Mammary epithelial cell (primary cell): ENCODE measurements at regions of chr19 and their contacts with region 1.

Region 1: GRCh38 chr19:33887891-33888290 is 91.2 kb downstream of the KCTD15 start:
- DNase-seq: no peak
- H3K4me3 ChIP-seq: no peak overlapping the region
- H3K27ac ChIP-seq: no peak overlapping the region
- H3K4me1 ChIP-seq: no peaks in the 10 kb centered on the region
- H3K27me3 ChIP-seq: no peaks in the 10 kb centered on the region
- CTCF ChIP-seq: no peak

Region 2: DNA sequence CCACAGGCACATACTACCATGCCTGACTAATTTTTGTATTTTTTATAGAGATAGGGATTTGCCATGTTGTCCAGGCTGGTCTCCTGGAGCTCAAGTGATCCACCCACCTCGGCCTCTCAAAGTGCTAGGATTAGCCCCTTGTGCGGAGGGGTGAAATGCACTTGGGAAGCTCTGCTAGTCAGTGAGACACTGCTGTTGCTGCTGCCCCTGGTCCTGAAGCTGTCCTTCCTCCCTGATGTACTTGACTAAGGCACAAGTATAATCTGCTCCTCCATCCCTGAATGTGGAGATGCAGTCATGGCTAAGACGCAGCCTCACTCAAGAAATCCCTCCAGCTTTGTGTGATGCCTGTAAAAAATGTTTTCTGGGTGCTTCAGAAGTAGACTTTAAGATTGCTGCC is 33.3 kb after region 1 on chr19:
- CTCF ChIA-PET with region 1: interaction called, 14 read pairs
- dilution Hi-C with region 1: no loop called
- in situ Hi-C with region 1: no loop called
- intact Hi-C with region 1: no loop called
- DNase-seq: no peak
- H3K4me3 ChIP-seq: no peak overlapping the region
- H3K27ac ChIP-seq: no peak overlapping the region
- H3K4me1 ChIP-seq: no peaks in the 10 kb centered on the region
- H3K27me3 ChIP-seq: no peaks in the 10 kb centered on the region
- CTCF ChIP-seq: no peak